ENCODE measurements at regions of chr2 and their contacts with region 1.

Region 1: DNA sequence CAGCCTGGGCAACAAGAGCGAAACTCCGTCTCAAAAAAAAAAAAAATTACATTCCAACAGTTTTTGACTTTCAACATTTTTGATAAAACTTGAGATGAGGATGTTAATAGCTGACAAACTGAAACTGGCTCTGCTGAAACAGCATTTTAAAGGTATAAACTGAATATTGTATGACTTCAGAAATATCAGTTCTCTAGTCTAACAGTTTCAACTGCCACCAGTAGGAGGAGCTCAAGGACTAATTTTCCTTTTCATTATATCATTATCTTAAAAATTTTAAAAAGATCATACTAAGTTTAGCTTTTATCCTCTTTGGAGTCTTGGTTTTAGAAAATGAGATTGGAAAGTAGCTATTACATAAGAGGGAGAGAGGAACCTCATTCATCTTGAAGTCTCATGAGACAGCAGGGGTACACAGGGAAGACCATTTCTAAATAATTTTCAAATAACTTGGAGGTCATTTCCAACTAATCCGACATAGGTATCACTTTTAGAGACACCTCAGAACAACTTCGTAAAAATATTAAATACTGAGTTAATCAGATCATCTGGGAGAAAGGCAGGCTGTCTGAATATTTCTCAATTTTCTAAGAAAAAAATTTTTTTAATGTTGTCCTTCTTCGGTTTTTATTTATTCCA is 37.6 kb upstream of the MCM6 start:
- DNase-seq: no peak
- ATAC-seq: peak in 3 of 4 donors; percentile 54 to 69 (median 63)
- H3K4me3 ChIP-seq: no peak overlapping the region
- H3K27ac ChIP-seq: no peak overlapping the region
- H3K4me1 ChIP-seq: no peaks in the 10 kb centered on the region
- H3K27me3 ChIP-seq: no peaks in the 10 kb centered on the region
- CTCF ChIP-seq: peak; percentile 38 to 65 (median 52)

Region 2: DNA sequence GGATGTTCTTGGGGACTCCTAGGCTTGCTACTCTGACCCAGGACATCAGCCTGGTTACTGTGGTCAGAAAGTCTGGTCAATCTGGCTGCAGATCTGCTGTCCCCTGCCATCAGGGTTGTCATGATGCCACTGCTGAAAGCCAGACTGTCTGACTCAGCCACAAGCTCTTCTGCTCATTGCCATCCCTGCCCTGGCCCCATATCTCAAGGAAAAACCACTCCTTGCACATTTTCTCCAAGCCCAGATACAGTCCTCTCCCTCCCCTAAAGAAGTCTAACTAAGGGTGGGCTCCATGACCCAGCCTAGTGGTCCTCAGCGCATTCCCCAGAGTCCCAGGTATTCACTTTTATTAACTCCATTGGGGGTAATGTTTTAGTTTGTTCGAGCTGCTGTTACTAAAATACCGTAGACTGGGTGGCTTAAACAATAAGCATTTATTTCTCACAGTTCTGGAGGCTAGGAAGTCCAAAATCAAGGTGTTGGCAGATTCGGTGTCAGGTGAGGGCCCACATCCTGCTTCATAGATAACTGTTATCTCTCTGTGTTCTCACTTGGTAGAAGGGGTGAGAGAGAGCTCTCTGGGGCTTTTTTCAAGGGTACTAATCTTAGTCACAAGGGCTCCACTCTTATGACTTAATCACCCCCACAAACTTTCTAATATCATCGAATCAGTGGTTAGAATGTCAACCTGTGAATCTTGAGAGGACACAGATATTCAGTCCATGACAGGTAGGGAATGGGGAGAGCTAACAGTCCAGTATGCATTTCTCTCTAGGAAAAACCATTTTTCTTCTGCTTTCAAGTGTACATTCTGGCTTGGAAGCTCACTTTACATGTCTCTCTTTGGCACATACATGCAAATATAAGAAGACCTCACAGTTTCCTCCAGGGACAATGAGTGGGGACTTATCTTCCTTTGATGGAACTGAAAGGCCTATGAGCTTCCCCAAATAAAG is 298.9 kb after region 1 on chr2:
- intact Hi-C with region 1: no loop called
- DNase-seq: no peak
- ATAC-seq: no peak
- H3K4me3 ChIP-seq: no peak overlapping the region
- H3K27ac ChIP-seq: no peak overlapping the region
- H3K4me1 ChIP-seq: peaks cover 0 to 8% (median 5%) of the 10 kb centered on the region in 3 donors
- H3K27me3 ChIP-seq: no peaks in the 10 kb centered on the region
- CTCF ChIP-seq: no peak

Region 3: DNA sequence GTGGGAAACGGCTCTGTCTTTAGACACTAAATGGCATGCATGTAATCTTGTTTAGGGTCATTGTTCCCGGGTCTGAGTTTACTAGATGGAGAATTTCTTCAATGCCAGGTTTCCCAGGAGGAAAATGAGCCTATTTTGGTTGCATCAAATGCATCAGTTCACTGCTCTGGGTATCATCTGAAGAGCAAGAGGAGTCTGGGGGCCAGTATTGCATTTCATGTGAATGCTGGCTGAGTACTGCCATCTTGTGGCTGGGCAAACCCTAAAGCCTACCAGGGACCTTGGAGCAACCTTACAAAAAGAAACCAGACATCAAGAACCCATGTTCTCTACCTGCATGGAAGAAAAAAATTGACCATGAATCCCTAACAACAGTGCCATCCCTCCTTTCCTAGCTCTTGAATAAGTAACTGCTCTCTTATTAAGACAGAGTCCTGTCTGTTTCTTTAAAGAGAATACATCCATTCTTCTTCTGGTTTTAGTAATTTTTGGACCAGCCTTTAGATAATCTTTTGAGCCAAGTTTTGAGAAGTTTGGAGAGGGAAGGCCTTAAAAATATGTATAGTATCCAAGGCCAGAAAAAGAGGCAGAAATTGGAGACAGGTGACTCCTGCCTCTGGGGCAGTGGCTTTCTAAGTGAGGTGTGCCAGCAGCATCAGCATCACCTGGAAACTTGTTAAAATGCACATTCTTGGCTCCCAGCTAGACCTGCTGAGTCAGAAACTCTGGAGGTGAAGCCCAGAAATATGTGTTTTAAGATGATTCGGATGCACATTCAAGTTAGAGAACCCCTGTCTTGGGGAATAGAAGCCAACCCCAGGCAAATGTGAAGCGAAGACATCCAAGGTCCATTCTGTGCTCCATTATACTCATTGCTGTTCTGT is 465.1 kb after region 1 on chr2:
- intact Hi-C with region 1: loop called in 2 of 3 experiments (anchors 10 kb)
- DNase-seq: peak in 2 of 6 donors; percentile 24 to 31
- ATAC-seq: peak; percentile 48 to 87 (median 82)
- H3K4me3 ChIP-seq: no peak overlapping the region
- H3K27ac ChIP-seq: no peak overlapping the region
- H3K4me1 ChIP-seq: no peaks in the 10 kb centered on the region
- H3K27me3 ChIP-seq: no peaks in the 10 kb centered on the region
- CTCF ChIP-seq: peak; percentile 25 to 46 (median 36)

Region 4: GRCh38 chr2:136384531-136385303 is 470.9 kb after region 1 on chr2:
- intact Hi-C with region 1: loop called (anchors 5 to 10 kb)
- DNase-seq: peak in 1 of 6 donors; percentile 19
- ATAC-seq: peak in 3 of 4 donors; percentile 82 to 86 (median 84)
- H3K4me3 ChIP-seq: no peak overlapping the region
- H3K27ac ChIP-seq: no peak overlapping the region
- H3K4me1 ChIP-seq: no peaks in the 10 kb centered on the region
- H3K27me3 ChIP-seq: no peaks in the 10 kb centered on the region
- CTCF ChIP-seq: peak in 2 of 4 donors; percentile 18

Measured in pancreas (tissue), 10 donors.